Heart right ventricle (tissue), 16 donors: ENCODE measurements at regions of chr16 and their contacts with region 1.

Region 1: DNA sequence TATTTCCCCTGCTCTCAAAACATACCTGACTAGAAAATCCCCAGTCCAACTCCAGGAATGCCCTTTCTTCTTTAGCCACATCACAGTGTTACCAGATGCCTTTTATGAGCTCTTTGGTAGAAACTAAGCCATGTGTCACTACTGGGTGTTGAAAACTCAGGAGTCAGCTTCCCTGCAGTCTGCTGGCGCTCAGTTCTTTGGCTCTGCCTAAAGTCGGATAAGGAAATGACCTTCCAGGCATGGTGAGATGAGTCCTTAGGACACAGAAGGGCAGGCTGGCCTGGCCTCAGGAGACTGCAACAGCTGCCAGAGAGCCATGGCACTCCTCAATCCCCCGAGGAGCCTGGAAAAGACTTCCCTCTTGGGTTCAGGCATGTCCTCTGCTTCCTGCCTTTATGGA is 89.1 kb downstream of the CDH13 start:
- DNase-seq: peak; percentile 59 to 62
- ATAC-seq: peak; percentile 80 to 96 (median 91)
- H3K4me3 ChIP-seq: peak overlapping the region in 3 of 10 donors; percentile 12 to 25 (median 24)
- H3K27ac ChIP-seq: peak overlapping the region; percentile 54 to 86 (median 76)
- H3K4me1 ChIP-seq: peaks cover 8 to 47% (median 36%) of the 10 kb centered on the region in 9 donors
- H3K27me3 ChIP-seq: no peaks in the 10 kb centered on the region
- CTCF ChIP-seq: no peak

Region 2: GRCh38 chr16:82603784-82604411 is 111.9 kb before region 1 on chr16:
- intact Hi-C with region 1: no loop called
- DNase-seq: peak; percentile 46 to 58
- ATAC-seq: peak; percentile 69 to 92 (median 85)
- H3K4me3 ChIP-seq: no peak overlapping the region
- H3K27ac ChIP-seq: no peak overlapping the region
- H3K4me1 ChIP-seq: peaks cover 0 to 8% (median 0%) of the 10 kb centered on the region in 9 donors
- H3K27me3 ChIP-seq: no peaks in the 10 kb centered on the region
- CTCF ChIP-seq: peak; percentile 49 to 83 (median 71)

Region 3: GRCh38 chr16:82738699-82739098 is 22.9 kb after region 1 on chr16:
- intact Hi-C with region 1: loop called in 1 of 10 experiments (anchors 2 kb)
- DNase-seq: no peak
- ATAC-seq: no peak
- H3K4me3 ChIP-seq: no peak overlapping the region
- H3K27ac ChIP-seq: peak overlapping the region in 6 of 10 donors; percentile 53 to 88 (median 86)
- H3K4me1 ChIP-seq: peaks cover 6 to 51% (median 36%) of the 10 kb centered on the region in 9 donors
- H3K27me3 ChIP-seq: no peaks in the 10 kb centered on the region
- CTCF ChIP-seq: peak in 8 of 9 donors; percentile 10 to 61 (median 42)